Prostate gland (tissue), 2 donors: ENCODE measurements at regions of chr7 and their contacts with region 1.

Region 1: DNA sequence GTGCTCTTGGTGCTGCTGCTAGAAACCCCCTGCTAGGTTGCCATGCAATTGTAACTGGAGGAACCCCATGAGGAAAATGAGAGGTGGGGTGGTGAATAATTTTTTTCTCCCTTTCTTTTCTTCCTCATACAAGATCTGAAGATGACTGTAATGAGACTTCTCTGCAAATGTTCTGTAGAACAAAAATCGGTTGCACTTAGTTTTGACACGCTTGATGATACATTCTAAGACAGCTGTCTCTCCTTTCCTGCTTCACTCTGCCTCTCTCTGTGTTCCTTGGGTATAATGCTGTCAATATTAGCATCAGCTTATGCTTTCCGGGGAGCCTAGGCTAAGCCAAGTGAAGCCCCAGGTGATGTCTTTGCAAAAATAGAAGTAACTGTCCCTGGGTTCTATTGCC is 721.5 kb downstream of the POM121L12 start:
- DNase-seq: no peak
- H3K4me3 ChIP-seq: no peak overlapping the region
- H3K27ac ChIP-seq: no peak overlapping the region
- H3K4me1 ChIP-seq: no peaks in the 10 kb centered on the region
- H3K27me3 ChIP-seq: no peaks in the 10 kb centered on the region
- CTCF ChIP-seq: no peak
- POLR2A ChIP-seq: no peak

Region 2: GRCh38 chr7:53205006-53205405 is 551.9 kb before region 1 on chr7:
- intact Hi-C with region 1: no loop called
- DNase-seq: no peak
- H3K4me3 ChIP-seq: no peak overlapping the region
- H3K27ac ChIP-seq: no peak overlapping the region
- H3K4me1 ChIP-seq: no peaks in the 10 kb centered on the region
- H3K27me3 ChIP-seq: no peaks in the 10 kb centered on the region
- CTCF ChIP-seq: no peak
- POLR2A ChIP-seq: no peak

Region 3: DNA sequence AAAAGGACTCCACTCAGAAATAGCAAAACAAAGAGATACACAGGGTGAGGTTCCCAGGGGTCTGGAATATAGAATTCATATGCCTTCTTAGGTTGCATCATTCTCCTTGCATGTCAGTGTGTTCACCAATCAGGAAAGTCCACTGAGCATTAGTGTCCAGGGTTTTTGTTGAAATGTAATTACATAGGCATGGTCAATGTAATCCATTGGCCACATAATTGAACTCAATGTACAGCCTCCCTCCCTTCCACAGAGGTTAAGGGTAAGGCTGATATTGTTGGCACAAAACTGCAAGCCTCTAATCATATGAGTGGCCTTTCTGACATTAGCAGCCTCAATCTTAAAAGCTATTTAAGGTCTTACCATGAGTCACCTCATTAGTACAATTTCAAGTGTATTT is 49.2 kb after region 1 on chr7:
- intact Hi-C with region 1: loop called (anchors 5 kb)
- DNase-seq: no peak
- H3K4me3 ChIP-seq: no peak overlapping the region
- H3K27ac ChIP-seq: no peak overlapping the region
- H3K4me1 ChIP-seq: no peaks in the 10 kb centered on the region
- H3K27me3 ChIP-seq: no peaks in the 10 kb centered on the region
- CTCF ChIP-seq: no peak
- POLR2A ChIP-seq: no peak